Motor neuron (in vitro differentiated cells): ENCODE measurements at regions of chr6 and their contacts with region 1.

Region 1: GRCh38 chr6:99467509-99468106 is 42.5 kb upstream of the PNISR start:
- ATAC-seq: peak in 2 of 8 experiments; percentile 22 to 38
- H3K4me3 ChIP-seq: no peak overlapping the region
- H3K27ac ChIP-seq: no peak overlapping the region
- H3K4me1 ChIP-seq: peaks cover 4 to 7% of the 10 kb centered on the region in 2 donors

Region 2: GRCh38 chr6:99746261-99746895 is 278.8 kb after region 1 on chr6:
- in situ Hi-C with region 1: loop called in 2 of 9 experiments (anchors 25 kb)
- ATAC-seq: peak; percentile 52 to 93 (median 58)
- H3K4me3 ChIP-seq: no peak overlapping the region
- H3K27ac ChIP-seq: no peak overlapping the region
- H3K4me1 ChIP-seq: no peaks in the 10 kb centered on the region

Region 3: GRCh38 chr6:99822741-99823512 is 355.3 kb after region 1 on chr6:
- in situ Hi-C with region 1: loop called in 1 of 9 experiments (anchors 25 kb)
- ATAC-seq: peak; percentile 72 to 99 (median 87)
- H3K4me3 ChIP-seq: peak overlapping the region; percentile 20 to 41 (median 36)
- H3K27ac ChIP-seq: no peak overlapping the region
- H3K4me1 ChIP-seq: peaks cover 0 to 7% of the 10 kb centered on the region in 2 donors